Left ventricle myocardium inferior (tissue), 1 donor: ENCODE measurements at regions of chr15 and their contacts with region 1.

Region 1: GRCh38 chr15:57306161-57306943 is 70.0 kb upstream of the CGNL1 start:
- DNase-seq: peak; percentile 89
- H3K4me3 ChIP-seq: peak overlapping the region; percentile 70
- H3K27ac ChIP-seq: peak overlapping the region; percentile 11
- H3K4me1 ChIP-seq: peaks cover 17% of the 10 kb centered on the region
- H3K27me3 ChIP-seq: no peaks in the 10 kb centered on the region
- CTCF ChIP-seq: peak; percentile 94

Region 2: DNA sequence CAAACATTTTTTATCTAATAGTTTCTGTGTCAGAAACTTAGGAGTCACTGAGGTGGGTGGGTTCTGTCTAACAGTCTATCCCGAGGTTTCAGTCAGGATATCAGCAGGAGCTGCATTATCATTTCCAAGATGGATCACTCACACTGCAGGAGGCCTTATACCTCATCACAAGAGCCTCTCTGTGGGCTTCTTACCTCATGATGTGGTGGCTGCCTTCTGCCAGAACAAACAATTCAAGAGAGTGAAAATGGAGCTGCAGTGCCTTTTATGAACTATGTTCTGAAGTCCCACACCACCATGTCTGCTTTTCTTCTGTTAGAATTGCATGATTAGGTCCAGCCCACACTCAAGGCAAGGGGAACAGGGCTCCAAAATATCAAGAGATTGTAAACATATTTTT is 1090.6 kb before region 1 on chr15:
- intact Hi-C with region 1: no loop called
- DNase-seq: no peak
- H3K4me3 ChIP-seq: no peak overlapping the region
- H3K27ac ChIP-seq: no peak overlapping the region
- H3K4me1 ChIP-seq: no peaks in the 10 kb centered on the region
- H3K27me3 ChIP-seq: no peaks in the 10 kb centered on the region
- CTCF ChIP-seq: no peak

Region 3: DNA sequence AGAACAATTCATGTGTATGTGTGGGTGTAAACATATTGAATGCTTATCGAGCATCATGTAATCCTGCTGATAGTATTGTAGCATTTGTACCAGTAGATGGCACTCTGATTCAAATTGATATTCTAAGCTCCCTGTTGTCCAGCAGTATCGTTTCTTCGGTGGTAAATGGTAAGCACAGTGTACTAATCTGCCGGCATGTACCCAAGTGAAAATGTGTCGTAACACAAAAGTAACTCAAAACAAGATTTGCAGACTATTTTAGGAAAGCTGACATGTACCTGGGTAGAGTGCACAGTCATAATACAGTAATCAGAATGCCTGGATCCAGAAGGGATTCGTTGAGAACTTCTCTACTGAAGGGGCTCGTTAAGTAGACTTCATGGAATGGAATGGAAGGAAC is 809.7 kb before region 1 on chr15:
- intact Hi-C with region 1: loop called (anchors 5 kb)
- DNase-seq: no peak
- H3K4me3 ChIP-seq: no peak overlapping the region
- H3K27ac ChIP-seq: no peak overlapping the region
- H3K4me1 ChIP-seq: no peaks in the 10 kb centered on the region
- H3K27me3 ChIP-seq: no peaks in the 10 kb centered on the region
- CTCF ChIP-seq: peak; percentile 77

Region 4: GRCh38 chr15:57146506-57147201 is 159.7 kb before region 1 on chr15:
- intact Hi-C with region 1: loop called (anchors 2 kb)
- DNase-seq: no peak
- H3K4me3 ChIP-seq: peak overlapping the region; percentile 47
- H3K27ac ChIP-seq: peak overlapping the region; percentile 67
- H3K4me1 ChIP-seq: peaks cover 44% of the 10 kb centered on the region
- H3K27me3 ChIP-seq: no peaks in the 10 kb centered on the region
- CTCF ChIP-seq: peak; percentile 88

Region 5: GRCh38 chr15:57235873-57236272 is 70.5 kb before region 1 on chr15:
- intact Hi-C with region 1: no loop called
- DNase-seq: no peak
- H3K4me3 ChIP-seq: no peak overlapping the region
- H3K27ac ChIP-seq: no peak overlapping the region
- H3K4me1 ChIP-seq: no peaks in the 10 kb centered on the region
- H3K27me3 ChIP-seq: no peaks in the 10 kb centered on the region
- CTCF ChIP-seq: no peak